GM10248 (cell line): ENCODE measurements at regions of chr14 and their contacts with region 1.

Region 1: GRCh38 chr14:104078031-104078455 is 7.5 kb upstream of the ASPG start:
- DNase-seq: peak; percentile 92
- CTCF ChIP-seq: peak; percentile 100

Region 2: DNA sequence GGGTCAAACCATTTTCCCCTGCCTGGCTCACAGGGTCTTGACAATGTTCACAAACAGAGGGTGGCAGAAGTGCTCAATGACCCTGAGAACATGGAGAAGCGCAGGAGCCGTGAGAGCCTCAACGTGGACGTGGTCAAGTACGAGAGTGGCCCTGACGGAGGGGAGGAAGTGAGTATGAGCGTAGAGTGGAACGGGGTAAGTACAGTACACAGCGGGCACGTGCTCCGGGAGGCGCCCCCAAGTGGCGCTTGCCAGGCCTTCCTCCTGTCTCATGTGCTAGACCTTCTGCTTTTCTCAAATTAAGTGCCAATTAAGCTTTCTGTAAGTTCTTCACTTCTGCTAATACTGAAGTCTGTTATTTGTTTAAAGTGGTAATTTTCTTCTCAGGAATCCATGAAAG is 398.7 kb before region 1 on chr14:
- CTCF ChIA-PET with region 1: no interaction called
- POLR2A ChIA-PET with region 1: no interaction called
- DNase-seq: peak; percentile 79
- CTCF ChIP-seq: peak; percentile 56

Region 3: GRCh38 chr14:103763730-103764488 is 314.1 kb before region 1 on chr14:
- CTCF ChIA-PET with region 1: no interaction called
- POLR2A ChIA-PET with region 1: no interaction called
- DNase-seq: peak; percentile 50
- CTCF ChIP-seq: no peak

Region 4: GRCh38 chr14:104048758-104049507 is 29.1 kb before region 1 on chr14:
- CTCF ChIA-PET with region 1: interaction called, 14 read pairs
- POLR2A ChIA-PET with region 1: no interaction called
- DNase-seq: no peak
- CTCF ChIP-seq: no peak

Region 5: GRCh38 chr14:104094709-104095438 is 16.8 kb after region 1 on chr14:
- CTCF ChIA-PET with region 1: interaction called, 26 read pairs
- POLR2A ChIA-PET with region 1: no interaction called
- DNase-seq: peak; percentile 86
- CTCF ChIP-seq: peak; percentile 87

Region 6: DNA sequence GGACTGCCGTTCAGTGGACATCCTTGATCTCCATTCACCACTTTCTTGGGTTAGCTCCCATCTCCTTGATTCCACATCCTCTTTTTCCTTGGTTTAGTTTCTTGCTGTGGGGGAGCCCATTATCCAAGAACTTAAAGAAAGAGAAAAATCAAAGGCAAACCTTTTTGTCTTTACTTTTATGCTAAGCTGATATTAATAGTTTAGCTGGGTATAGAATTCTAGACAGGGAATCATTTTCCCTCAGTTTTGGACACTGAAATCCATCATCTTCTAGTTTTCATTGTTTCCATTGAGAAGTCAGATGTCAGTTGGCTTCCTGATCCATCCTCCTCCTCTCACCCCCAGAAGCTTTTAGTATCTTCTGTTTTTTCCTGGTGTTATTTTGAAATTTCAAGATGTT is 51.5 kb after region 1 on chr14:
- CTCF ChIA-PET with region 1: interaction called, 24 read pairs
- POLR2A ChIA-PET with region 1: no interaction called
- DNase-seq: no peak
- CTCF ChIP-seq: no peak

Region 7: GRCh38 chr14:104563742-104564615 is 485.9 kb after region 1 on chr14:
- CTCF ChIA-PET with region 1: interaction called, 11 read pairs
- POLR2A ChIA-PET with region 1: no interaction called
- DNase-seq: peak; percentile 87
- CTCF ChIP-seq: peak; percentile 75